Dendritic cell treated with granulocyte-macrophage colony-stimulating factor and Interleukin-4, amounts not matched to agents 40 ng/mL and 50 ng/mL, for 4 days (primary cell): ENCODE measurements at regions of chr11 and their contacts with region 1.

Region 1: DNA sequence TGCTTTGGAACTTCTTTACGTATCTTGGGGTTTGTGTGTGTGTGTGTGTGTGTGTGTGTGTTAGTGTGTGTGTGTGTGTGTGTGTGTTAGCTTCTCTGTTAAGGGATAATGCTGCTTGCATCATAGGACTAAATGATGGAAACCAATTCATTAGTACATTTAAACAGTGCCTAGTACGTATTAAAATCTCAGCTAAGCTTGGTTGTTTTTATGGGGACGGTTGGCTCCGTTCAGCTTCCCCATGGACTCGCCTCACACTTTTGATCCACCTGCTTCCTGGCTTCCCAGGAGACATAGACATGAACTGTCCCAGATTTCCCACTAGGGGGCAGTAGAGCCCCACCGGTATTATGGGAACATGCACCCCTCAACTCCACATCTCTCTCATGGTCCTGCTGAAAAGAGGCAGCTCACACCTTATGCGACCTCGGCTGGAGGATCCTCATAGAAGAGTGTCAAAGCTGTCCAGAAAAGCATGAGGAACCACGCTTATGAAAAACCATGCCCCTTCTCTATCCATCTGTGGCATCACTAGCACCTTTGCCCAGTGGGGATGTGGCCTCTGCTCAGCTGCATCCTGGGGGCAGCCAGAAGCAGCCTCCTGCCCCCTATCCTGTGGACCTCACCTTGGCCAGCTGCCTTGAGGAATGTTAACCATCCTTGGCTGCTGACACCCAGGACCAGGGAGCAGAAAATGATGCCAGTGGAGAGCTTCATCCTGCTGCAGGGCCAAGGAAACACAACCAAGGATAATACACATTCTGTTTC is 9.7 kb upstream of the SAAL1 start:
- H3K4me3 Mint-ChIP-seq: no peak overlapping the region
- H3K27ac Mint-ChIP-seq: no peak overlapping the region
- H3K4me1 Mint-ChIP-seq: peaks cover 9% of the 10 kb centered on the region
- H3K27me3 Mint-ChIP-seq: peaks cover 23% of the 10 kb centered on the region

Region 2: DNA sequence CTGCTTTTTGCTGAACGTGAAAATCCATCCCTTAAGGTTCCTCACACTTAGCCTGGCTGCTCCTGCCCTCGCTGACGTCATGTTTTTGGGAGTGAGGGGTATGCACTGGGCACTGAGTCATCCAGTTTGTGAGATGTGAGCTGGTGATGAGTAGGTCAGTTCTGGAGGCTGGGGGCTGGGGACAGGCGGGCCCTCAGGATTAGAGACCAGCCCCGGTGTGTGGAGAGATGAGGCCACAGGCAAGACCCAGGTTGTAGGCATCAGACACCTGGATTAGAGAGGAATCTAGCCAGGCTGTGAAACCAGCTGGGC is 371.8 kb before region 1 on chr11:
- intact Hi-C with region 1: no loop called
- H3K4me3 Mint-ChIP-seq: no peak overlapping the region
- H3K27ac Mint-ChIP-seq: no peak overlapping the region
- H3K4me1 Mint-ChIP-seq: no peaks in the 10 kb centered on the region
- H3K27me3 Mint-ChIP-seq: peaks cover 7% of the 10 kb centered on the region

Region 3: DNA sequence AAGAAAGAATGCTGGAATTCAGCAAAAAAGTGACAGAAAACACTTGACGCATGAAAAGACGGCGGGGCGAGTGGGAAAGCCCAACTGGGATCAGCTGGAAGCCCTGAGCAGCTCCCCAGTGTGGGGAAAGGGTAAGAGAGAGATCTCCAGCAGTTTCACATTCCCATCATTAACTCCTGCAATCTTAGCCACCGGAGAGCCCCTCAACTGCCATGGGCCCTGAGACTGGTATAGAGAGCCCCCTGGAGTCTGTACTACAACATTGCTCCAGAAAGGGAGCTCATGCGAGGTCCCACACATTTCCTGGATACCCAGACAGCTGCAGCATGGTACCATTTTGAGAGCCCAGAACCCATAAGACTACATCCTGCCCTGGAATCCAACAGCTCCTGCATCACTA is 88.2 kb after region 1 on chr11:
- intact Hi-C with region 1: loop called (anchors 1 kb)
- H3K4me3 Mint-ChIP-seq: no peak overlapping the region
- H3K27ac Mint-ChIP-seq: no peak overlapping the region
- H3K4me1 Mint-ChIP-seq: no peaks in the 10 kb centered on the region
- H3K27me3 Mint-ChIP-seq: peaks cover 44% of the 10 kb centered on the region

Region 4: DNA sequence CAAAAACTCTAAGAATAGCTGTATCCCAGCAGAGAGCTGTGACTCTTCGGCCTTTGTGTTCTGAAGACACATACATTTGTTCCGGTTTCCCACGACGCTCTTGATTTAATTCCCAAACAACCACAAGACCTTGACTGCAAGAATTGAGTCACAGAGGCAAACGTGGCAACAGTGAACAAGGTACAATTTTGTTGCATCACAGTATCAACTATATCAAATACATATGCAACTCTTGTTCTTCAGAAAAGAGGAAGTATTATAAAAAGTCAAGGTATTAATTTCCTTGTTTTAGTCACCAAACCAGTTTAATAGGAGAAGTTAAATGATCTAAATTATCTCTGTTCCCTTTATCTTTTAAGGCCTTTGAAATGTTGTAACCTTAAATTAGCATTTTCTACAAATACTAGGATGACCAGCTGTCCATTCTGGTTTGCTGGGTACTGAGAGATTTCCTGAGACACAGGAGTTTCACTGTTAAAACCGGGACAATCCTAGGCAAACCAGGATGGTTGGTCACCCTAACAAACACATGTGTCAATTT is 195.3 kb after region 1 on chr11:
- intact Hi-C with region 1: no loop called
- H3K4me3 Mint-ChIP-seq: no peak overlapping the region
- H3K27ac Mint-ChIP-seq: peak overlapping the region; percentile 55
- H3K4me1 Mint-ChIP-seq: peaks cover 51% of the 10 kb centered on the region
- H3K27me3 Mint-ChIP-seq: no peaks in the 10 kb centered on the region

Region 5: DNA sequence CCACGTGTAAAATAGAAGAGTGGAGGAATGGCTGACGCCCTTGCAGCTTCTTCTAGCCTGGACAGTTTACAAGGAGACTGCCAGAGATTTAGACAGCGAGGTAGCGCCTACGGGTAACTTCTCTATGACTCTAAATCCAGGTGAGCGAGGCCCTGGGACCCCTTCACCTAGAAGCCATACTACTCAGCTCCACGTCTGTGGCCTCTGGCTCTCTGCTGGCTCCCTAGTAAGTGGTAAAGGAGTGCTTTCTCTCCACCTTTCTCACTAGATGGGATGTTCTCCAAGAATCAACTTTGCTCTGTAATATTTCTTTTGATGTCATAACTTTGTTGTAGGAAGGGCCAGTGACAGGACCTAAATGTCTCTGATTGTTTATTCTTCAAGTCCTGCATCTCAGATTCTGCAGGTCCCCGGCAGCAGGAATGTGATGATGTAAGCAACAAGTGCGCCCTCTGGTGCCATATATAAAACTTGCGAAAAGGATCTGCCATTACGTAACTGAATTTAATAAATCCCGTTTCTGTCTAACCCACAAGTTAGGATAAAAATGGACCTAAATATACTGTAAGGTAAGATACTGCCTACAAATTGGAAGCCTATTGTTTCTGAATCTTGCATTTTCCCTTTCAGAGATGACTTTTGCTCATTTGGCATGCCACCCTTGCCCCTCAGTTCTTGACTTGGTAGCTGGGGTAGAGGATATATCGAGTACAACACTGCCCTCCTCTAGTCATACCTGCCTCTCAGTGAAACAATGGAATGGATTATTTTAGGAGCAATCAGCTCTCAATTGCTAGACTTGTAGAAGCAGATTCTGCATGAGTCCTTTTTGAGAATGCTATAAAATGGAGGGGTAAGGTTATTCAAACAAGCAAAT is 687.1 kb after region 1 on chr11:
- intact Hi-C with region 1: loop called (anchors 2 kb)
- H3K4me3 Mint-ChIP-seq: no peak overlapping the region
- H3K27ac Mint-ChIP-seq: no peak overlapping the region
- H3K4me1 Mint-ChIP-seq: peaks cover 5% of the 10 kb centered on the region
- H3K27me3 Mint-ChIP-seq: peaks cover 26% of the 10 kb centered on the region